ENCODE measurements at regions of chr11 and their contacts with region 1.

Region 1: DNA sequence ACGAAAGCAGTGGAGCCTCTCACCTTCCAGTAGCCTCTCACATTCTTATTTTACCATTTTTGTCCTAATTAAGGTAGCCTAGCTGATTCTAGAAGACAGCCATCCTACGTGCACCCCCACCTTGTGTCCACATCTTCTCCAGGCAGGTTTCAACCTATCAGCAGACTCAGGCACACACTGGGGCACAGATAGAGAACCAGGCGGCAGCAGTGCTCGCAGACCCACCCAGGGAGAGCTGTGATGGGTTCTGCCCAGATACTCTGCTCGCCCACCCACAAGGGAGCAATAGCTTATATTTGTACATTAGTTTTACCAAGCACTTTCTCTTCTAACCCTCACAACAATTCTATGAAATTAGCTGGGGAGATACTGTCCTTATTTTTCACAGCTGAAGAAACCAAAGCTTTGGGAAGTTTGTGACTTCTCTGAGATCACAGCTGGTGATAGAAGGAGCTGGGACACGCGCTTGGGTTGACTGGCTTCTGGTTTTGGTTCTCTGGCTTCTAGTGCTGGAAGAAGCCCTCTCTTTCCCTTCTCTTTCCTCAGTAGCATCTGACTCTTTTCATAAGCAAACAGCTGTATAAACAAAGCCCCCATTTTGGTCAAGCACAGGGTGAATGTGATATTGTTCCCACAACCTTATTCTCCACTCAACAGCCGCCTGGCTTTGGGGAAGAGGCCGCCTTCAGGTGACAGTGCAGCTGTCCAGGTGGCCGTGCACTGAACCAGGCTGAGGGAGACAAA is 36.9 kb downstream of the PPP2R1B start:
- DNase-seq: no peak
- H3K4me3 ChIP-seq: no peak overlapping the region
- H3K27ac ChIP-seq: no peak overlapping the region
- H3K4me1 ChIP-seq: peaks cover 0 to 12% (median 2%) of the 10 kb centered on the region in 4 experiments; a peak in 5 of 7 replicates
- H3K27me3 ChIP-seq: no peaks in the 10 kb centered on the region
- CTCF ChIP-seq: no peak
- EP300 ChIP-seq: no peak
- POLR2A ChIP-seq: no peak
- RAD21 ChIP-seq: no peak

Region 2: GRCh38 chr11:111718436-111718835 is 10.8 kb before region 1 on chr11:
- CTCF ChIA-PET with region 1: interaction called, 11 read pairs
- POLR2A ChIA-PET with region 1: interaction called, 12 read pairs
- DNase-seq: no peak
- H3K4me3 ChIP-seq: no peak overlapping the region
- H3K27ac ChIP-seq: no peak overlapping the region
- H3K4me1 ChIP-seq: peaks cover 4 to 7% (median 4%) of the 10 kb centered on the region in 4 experiments; a peak in 5 of 7 replicates
- H3K27me3 ChIP-seq: no peaks in the 10 kb centered on the region
- CTCF ChIP-seq: no peak
- EP300 ChIP-seq: no peak
- POLR2A ChIP-seq: no peak
- RAD21 ChIP-seq: no peak

Measured in H1 (cell line).